ENCODE measurements at regions of chr3 and their contacts with region 1.

Region 1: DNA sequence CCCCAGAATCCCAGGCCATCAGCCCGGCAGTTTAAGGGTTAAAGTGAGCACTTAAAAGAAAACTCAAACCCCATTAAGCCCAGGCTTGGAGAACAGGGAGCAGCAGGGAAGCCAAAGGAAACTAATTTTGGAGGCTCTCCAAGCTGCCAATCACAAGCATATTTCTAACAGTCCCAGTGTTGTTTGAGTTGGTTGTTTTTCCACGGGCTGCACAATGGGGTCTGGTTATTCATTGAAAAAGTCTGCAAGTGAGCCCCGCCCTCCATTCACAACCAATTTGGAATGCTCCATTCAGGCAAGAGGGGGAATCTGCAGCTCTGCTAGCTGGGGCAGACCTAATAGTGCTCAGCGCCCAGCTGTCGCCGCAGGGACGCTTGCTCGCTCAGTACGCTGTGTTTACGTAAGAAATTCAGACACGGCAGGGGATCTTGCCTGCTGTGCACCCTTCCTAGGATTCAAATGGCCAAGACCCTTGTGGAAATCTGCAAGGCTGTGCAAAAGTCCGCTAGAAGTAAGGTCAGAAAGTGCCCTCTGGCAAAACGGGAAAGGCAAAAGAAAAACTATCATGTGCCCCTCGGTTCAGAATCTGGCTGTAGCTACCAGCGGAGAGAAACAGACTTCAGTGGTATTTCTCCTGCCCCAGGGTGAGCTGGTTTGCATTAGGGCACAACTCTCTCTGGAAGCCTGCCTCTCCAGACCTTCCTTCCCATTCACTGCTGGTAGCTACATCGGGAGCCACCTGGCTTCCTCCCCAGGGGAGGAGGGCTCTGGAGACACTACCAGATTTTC is 11.0 kb downstream of the ETV5 start:
- DNase-seq: no peak
- H3K4me3 ChIP-seq: peak overlapping the region; percentile 55
- CTCF ChIP-seq: no peak

Region 2: GRCh38 chr3:185733980-185734724 is 363.7 kb before region 1 on chr3:
- CTCF ChIA-PET with region 1: no interaction called
- POLR2A ChIA-PET with region 1: no interaction called
- DNase-seq: no peak
- H3K4me3 ChIP-seq: no peak overlapping the region
- CTCF ChIP-seq: peak; percentile 46

Region 3: GRCh38 chr3:186108941-186109865 is 11.3 kb after region 1 on chr3 and contains the start of gene ETV5:
- CTCF ChIA-PET with region 1: interaction called, 3 read pairs
- POLR2A ChIA-PET with region 1: interaction called, 14 read pairs
- DNase-seq: peak; percentile 99
- H3K4me3 ChIP-seq: peak within 1 kb of the TSS; percentile 86
- CTCF ChIP-seq: no peak

Region 4: GRCh38 chr3:186361762-186362536 is 264.1 kb after region 1 on chr3 and contains the start of gene DGKG:
- CTCF ChIA-PET with region 1: no interaction called
- POLR2A ChIA-PET with region 1: no interaction called
- DNase-seq: no peak
- H3K4me3 ChIP-seq: peak within 1 kb of the TSS; percentile 30
- CTCF ChIP-seq: no peak

Region 5: GRCh38 chr3:187327845-187328244 is 1230.0 kb after region 1 on chr3:
- CTCF ChIA-PET with region 1: no interaction called
- POLR2A ChIA-PET with region 1: no interaction called
- DNase-seq: no peak
- H3K4me3 ChIP-seq: no peak overlapping the region
- CTCF ChIP-seq: no peak